Prostate gland (tissue), 2 donors: ENCODE measurements at regions of chr19 and their contacts with region 1.

Region 1: DNA sequence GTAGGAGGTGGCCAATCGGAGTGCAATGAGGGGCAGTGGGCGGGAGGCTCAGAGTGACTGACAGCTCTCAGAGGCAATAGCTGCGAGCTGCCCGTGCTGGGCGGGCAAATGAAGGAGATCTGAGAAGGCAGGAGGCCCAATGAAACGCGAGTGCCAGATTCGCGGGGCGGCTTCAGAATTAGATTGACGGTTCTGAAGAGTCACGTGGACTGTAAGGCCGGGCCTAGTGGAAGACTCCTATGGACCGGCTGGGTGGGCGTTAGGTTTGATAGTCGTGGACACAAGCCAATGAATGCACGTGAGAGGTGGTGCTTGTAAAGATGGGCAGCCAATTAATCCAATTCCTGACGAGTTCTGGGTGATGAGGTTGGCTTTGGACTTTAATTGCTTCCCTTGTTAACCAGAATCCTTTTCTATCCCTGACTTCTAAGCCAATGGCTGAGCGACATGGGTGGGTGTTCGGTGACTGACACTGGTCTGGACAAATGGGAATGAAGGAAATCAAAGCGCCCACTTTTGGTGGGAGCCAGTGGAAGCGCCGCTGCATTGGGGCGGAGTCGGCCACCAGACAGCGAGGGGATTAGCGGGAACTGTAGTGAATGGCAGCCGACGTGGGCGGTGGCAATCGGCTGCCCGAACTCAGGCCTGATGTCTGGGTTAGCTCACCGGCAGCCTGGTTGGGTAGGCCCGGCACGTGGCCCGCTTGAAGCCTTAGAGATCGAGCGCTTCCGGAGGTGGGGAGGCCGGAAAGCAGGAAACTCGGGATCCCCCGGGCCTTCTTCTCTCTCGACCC is 524 bp upstream of the KHSRP start:
- DNase-seq: peak; percentile 100
- H3K4me3 ChIP-seq: peak overlapping the region in 1 of 2 donors; percentile 75
- H3K27ac ChIP-seq: peak overlapping the region; percentile 68 to 73
- H3K4me1 ChIP-seq: peaks cover 5% of the 10 kb centered on the region
- H3K27me3 ChIP-seq: no peaks in the 10 kb centered on the region
- CTCF ChIP-seq: peak in 2 of 4 experiments; percentile 21 to 30
- POLR2A ChIP-seq: no peak

Region 2: DNA sequence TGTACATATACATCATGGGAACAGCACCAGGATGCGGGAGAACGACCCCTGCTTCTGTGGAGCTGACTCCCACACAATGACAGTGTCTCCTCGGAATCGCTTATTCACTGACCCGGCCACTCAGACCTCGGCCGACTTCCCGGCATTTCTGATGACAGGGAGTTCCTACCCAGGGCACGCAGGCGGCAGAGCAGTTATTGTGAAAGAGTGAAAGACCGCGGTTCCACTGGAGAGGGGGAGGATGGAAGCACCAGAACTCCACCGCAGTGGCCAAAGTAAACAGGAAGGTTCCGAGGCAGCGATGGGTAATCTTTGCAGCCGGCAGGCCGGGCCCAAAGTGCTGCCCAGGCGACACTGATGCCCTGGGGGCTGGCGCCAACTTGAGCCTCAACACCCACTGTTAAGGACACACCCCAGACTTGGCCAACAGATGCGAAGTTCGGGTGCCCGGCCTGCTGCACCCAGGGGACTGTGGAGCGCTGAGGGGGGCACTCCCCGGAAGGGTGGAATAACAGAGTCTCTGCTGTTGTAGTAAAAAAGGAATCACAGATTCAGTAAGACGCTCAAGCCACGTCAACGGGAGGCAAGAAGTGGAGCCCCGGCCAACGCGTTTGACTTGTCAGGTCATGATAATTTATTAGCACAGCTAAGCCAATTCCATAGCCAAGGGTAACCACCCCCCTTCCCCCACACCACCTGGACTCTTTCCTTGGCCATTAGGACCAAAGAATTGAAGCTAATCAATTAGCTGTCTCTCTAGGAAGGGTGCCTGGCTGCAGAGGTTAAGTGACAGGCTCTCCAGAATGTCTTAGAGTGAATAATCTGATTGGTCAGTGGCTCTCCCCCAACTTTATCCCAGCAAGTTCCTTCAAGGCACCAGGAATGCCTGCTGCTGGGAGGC is 151.2 kb before region 1 on chr19:
- intact Hi-C with region 1: loop called (anchors 5 kb)
- DNase-seq: peak; percentile 92
- H3K4me3 ChIP-seq: peak overlapping the region in 1 of 2 donors; percentile 10
- H3K27ac ChIP-seq: peak overlapping the region; percentile 79 to 87
- H3K4me1 ChIP-seq: peaks cover 60% of the 10 kb centered on the region
- H3K27me3 ChIP-seq: no peaks in the 10 kb centered on the region
- CTCF ChIP-seq: no peak
- POLR2A ChIP-seq: no peak

Region 3: GRCh38 chr19:6393074-6393983 is 31.8 kb before region 1 on chr19 and contains the start of gene GTF2F1:
- intact Hi-C with region 1: loop called (anchors 2 kb)
- DNase-seq: peak; percentile 83
- H3K4me3 ChIP-seq: peak within 1 kb of the TSS; percentile 74 to 85
- H3K27ac ChIP-seq: peak within 1 kb of the TSS; percentile 94 to 95
- H3K4me1 ChIP-seq: peaks cover 5% of the 10 kb centered on the region
- H3K27me3 ChIP-seq: no peaks in the 10 kb centered on the region
- CTCF ChIP-seq: peak in 1 of 4 experiments; percentile 17
- POLR2A ChIP-seq: peak; percentile 8
- total RNA-seq, gene GTF2F1: 70.7 to 82.7 TPM